ENCODE measurements at regions of chr6 and their contacts with region 1.

Region 1: GRCh38 chr6:21022343-21023107 is 488.3 kb downstream of the CDKAL1 start:
- DNase-seq: peak; percentile 85
- ATAC-seq: peak; percentile 88
- H3K4me3 ChIP-seq: peak overlapping the region; percentile 2 to 35; a peak in 2 of 4 replicates
- H3K27ac ChIP-seq: peak overlapping the region; percentile 88
- H3K4me1 ChIP-seq: peaks cover 51 to 66% of the 10 kb centered on the region in 2 experiments
- H3K27me3 ChIP-seq: no peaks in the 10 kb centered on the region
- CTCF ChIP-seq: no peak
- POLR2A ChIP-seq: no peak
- RAD21 ChIP-seq: peak; percentile 38

Region 2: GRCh38 chr6:20302702-20303251 is 719.7 kb before region 1 on chr6:
- CTCF ChIA-PET with region 1: no interaction called
- POLR2A ChIA-PET with region 1: no interaction called
- RAD21 ChIA-PET with region 1: no interaction called
- intact Hi-C with region 1: no loop called
- DNase-seq: no peak
- ATAC-seq: no peak
- H3K4me3 ChIP-seq: no peak overlapping the region
- H3K27ac ChIP-seq: no peak overlapping the region
- H3K4me1 ChIP-seq: no peaks in the 10 kb centered on the region
- H3K27me3 ChIP-seq: no peaks in the 10 kb centered on the region
- CTCF ChIP-seq: no peak
- POLR2A ChIP-seq: no peak
- RAD21 ChIP-seq: no peak

Region 3: GRCh38 chr6:20916086-20916485 is 106.4 kb before region 1 on chr6:
- CTCF ChIA-PET with region 1: no interaction called
- POLR2A ChIA-PET with region 1: no interaction called
- RAD21 ChIA-PET with region 1: no interaction called
- intact Hi-C with region 1: no loop called
- DNase-seq: no peak
- ATAC-seq: no peak
- H3K4me3 ChIP-seq: no peak overlapping the region
- H3K27ac ChIP-seq: no peak overlapping the region
- H3K4me1 ChIP-seq: peaks cover 3 to 5% of the 10 kb centered on the region in 2 experiments; a peak in 2 of 4 replicates
- H3K27me3 ChIP-seq: no peaks in the 10 kb centered on the region
- CTCF ChIP-seq: no peak
- POLR2A ChIP-seq: no peak
- RAD21 ChIP-seq: no peak

Region 4: DNA sequence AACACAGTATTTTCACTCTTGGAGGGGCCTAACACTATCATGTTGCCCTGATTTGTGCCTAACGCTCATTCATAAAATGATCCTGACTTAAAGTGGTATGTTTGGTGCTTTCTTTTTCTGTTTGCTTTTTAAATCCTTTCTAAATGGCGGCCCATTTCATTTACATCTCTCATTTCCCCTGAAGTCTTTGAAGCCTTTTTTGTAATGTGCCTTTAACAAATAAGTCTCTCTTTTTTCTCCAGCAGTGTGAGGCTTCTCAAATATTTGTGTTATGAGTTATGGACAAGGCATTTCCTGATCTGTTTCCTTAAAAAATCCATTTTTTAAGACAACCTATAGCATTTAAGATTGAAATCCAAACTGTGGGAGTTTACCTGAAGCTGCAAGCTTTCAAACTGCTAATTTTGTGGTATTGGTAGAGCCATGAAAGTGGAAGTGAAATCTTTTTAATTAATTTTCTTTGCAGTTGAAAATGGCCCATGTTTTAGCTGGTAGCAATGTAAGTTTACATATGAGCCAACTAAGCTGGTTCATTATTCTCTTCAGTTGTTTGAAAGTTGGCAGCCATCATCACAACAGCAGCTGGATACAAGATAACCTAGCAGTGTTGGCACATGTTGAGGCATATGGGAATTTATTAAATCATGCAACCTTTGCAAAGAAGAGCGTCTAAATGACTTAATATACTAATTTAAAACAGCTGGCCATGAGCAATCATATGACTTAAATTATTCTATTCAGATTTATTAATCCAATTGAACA is 18.6 kb before region 1 on chr6:
- CTCF ChIA-PET with region 1: no interaction called
- POLR2A ChIA-PET with region 1: no interaction called
- RAD21 ChIA-PET with region 1: no interaction called
- intact Hi-C with region 1: no loop called
- DNase-seq: no peak
- ATAC-seq: peak; percentile 8; the same call in 1 of the 2 replicates
- H3K4me3 ChIP-seq: no peak overlapping the region
- H3K27ac ChIP-seq: peak overlapping the region; percentile 87
- H3K4me1 ChIP-seq: peaks cover 72 to 76% of the 10 kb centered on the region in 2 experiments
- H3K27me3 ChIP-seq: no peaks in the 10 kb centered on the region
- CTCF ChIP-seq: no peak
- POLR2A ChIP-seq: no peak
- RAD21 ChIP-seq: no peak

Region 5: DNA sequence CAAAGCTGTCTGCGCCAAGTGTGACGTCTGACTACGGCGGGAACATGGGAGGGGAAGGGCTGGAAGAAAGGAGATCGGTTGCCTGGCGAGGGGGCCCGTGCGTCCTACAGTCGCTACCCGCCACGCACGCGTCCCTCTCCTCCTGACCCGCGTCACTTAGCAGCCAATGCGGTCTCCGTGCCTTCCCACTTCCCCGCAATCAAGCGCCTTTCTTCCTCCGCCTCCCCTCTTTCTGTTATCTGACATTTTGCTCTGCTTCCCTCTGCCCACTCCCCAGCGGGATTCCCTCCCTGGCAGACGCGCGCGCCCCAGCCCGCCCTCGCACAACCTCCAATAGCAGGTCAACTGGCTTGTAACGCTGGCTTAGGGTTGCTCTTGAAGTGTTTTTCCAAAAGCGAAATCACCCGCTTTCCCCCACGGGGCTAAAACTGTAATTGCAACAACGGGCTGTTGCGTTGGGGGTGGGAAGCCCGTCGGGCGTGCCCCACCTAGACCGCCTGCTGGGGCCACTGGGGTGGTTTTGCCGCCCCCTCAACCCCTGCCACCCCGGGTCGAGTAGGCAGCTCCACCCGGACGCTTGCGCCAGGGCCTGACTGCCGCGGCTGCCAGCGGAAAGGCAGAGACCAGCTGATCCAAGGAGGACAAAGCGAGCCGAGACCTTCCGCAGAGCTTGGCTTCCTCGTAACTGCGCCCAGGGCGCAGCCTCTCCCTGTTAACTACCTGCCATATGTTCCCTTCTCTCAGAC is 564.8 kb after region 1 on chr6:
- CTCF ChIA-PET with region 1: no interaction called
- POLR2A ChIA-PET with region 1: no interaction called
- RAD21 ChIA-PET with region 1: interaction called in 1 of 2 experiments, 3 read pairs
- intact Hi-C with region 1: loop called (anchors 1 kb)
- DNase-seq: peak; percentile 46
- ATAC-seq: peak; percentile 46
- H3K4me3 ChIP-seq: peak overlapping the region; percentile 66 to 72
- H3K27ac ChIP-seq: peak overlapping the region; percentile 84
- H3K4me1 ChIP-seq: peaks cover 10 to 26% of the 10 kb centered on the region in 2 experiments; a peak in 3 of 4 replicates
- H3K27me3 ChIP-seq: no peaks in the 10 kb centered on the region
- CTCF ChIP-seq: peak in 1 of 3 experiments; percentile 17; a peak in 1 of 6 replicates
- POLR2A ChIP-seq: peak; percentile 24
- RAD21 ChIP-seq: no peak

Measured in HCT116 (cell line).